ENCODE measurements at regions of chrX and their contacts with region 1.

Region 1: DNA sequence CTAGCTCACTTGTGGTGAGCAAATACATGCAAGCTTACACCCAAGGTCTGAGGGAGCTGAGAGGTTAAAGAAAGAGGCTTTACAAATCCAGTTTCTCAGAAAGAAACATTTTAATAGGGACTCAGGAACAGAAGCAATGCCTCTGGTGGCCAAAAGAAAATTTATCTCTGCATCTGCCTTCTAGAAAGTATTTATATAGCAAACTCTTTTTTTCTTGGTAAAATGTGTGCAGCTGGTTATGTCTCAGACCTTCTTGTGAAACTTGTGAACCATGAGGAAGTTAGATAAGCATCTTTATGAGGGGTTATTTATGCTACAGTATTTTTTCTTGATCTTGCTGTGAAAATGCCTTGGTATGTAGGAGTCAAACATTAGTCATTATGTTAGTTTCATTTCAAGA is 48.5 kb upstream of the CYSLTR1 start:
- DNase-seq: peak; percentile 92
- ATAC-seq: peak; percentile 92
- H3K4me3 ChIP-seq: no peak overlapping the region
- H3K27ac ChIP-seq: peak overlapping the region; percentile 94
- H3K4me1 ChIP-seq: peaks cover 40% of the 10 kb centered on the region
- H3K27me3 ChIP-seq: no peaks in the 10 kb centered on the region
- CTCF ChIP-seq: peak; percentile 58; the same call in 1 of the 2 replicates

Region 2: GRCh38 chrX:78119521-78120227 is 256.2 kb before region 1 on chrX:
- CTCF ChIA-PET with region 1: no interaction called
- POLR2A ChIA-PET with region 1: no interaction called
- intact Hi-C with region 1: loop called (anchors 5 kb)
- DNase-seq: peak; percentile 38
- ATAC-seq: peak; percentile 30; the same call in 1 of the 2 replicates
- H3K4me3 ChIP-seq: no peak overlapping the region
- H3K27ac ChIP-seq: no peak overlapping the region
- H3K4me1 ChIP-seq: peaks cover 21% of the 10 kb centered on the region
- H3K27me3 ChIP-seq: no peaks in the 10 kb centered on the region
- CTCF ChIP-seq: peak; percentile 61

Region 3: DNA sequence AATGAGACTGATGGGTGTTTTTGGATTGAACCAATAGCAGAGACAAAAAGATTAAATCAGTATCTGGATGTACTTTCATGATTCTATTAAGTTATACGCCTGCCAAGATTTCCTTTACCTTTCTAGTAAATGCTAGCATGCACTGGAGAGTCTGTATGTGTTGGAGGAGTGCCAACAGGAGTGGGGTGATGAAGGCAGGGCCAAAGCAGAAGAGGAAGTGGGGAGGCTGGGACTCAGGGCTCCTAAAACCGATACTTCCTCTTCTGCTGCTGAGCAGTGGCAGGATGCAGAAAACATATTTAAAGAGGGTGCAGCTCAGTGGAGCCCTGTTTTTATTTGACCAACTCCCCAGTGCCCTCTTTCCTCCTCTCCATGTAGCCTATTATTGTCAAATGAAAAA is 54.1 kb before region 1 on chrX:
- CTCF ChIA-PET with region 1: no interaction called
- POLR2A ChIA-PET with region 1: interaction called, 15 read pairs
- intact Hi-C with region 1: no loop called
- DNase-seq: peak; percentile 40
- ATAC-seq: peak; percentile 74
- H3K4me3 ChIP-seq: no peak overlapping the region
- H3K27ac ChIP-seq: no peak overlapping the region
- H3K4me1 ChIP-seq: 0 out of 2 replicates have a peak, but pooled peaks cover 4% of the 10 kb centered on the region
- H3K27me3 ChIP-seq: no peaks in the 10 kb centered on the region
- CTCF ChIP-seq: no peak

Region 4: DNA sequence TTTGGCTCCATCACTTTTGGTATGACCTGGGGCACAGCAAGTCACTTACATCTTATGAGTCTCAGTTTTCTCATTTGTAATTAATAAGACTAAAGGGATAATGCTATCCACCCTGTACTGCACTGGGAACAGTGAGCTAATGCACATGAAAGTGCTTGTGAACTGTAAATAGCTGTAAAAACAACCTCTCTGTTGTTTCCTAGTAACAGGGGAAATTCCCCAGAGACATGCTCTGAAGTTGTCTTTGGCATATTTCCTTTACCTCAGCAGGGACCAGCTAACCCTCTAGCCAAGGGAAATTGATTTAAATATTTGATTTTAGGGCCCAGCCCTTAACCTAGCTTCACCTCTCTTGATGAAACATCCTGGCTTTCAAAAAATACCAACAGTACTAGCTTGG is 42.4 kb before region 1 on chrX:
- CTCF ChIA-PET with region 1: no interaction called
- POLR2A ChIA-PET with region 1: no interaction called
- intact Hi-C with region 1: loop called (anchors 5 kb)
- DNase-seq: peak; percentile 4
- ATAC-seq: peak; percentile 81
- H3K4me3 ChIP-seq: no peak overlapping the region
- H3K27ac ChIP-seq: no peak overlapping the region
- H3K4me1 ChIP-seq: no peaks in the 10 kb centered on the region; the same call in 1 of the 2 replicates
- H3K27me3 ChIP-seq: no peaks in the 10 kb centered on the region
- CTCF ChIP-seq: no peak

Region 5: GRCh38 chrX:78455901-78456300 is 80.0 kb after region 1 on chrX:
- CTCF ChIA-PET with region 1: no interaction called
- POLR2A ChIA-PET with region 1: no interaction called
- intact Hi-C with region 1: loop called (anchors 5 kb)
- DNase-seq: peak; percentile 77
- ATAC-seq: peak; percentile 97
- H3K4me3 ChIP-seq: no peak overlapping the region
- H3K27ac ChIP-seq: peak overlapping the region; percentile 28; the same call in 1 of the 2 replicates
- H3K4me1 ChIP-seq: peaks cover 27% of the 10 kb centered on the region
- H3K27me3 ChIP-seq: no peaks in the 10 kb centered on the region
- CTCF ChIP-seq: no peak

Region 6: DNA sequence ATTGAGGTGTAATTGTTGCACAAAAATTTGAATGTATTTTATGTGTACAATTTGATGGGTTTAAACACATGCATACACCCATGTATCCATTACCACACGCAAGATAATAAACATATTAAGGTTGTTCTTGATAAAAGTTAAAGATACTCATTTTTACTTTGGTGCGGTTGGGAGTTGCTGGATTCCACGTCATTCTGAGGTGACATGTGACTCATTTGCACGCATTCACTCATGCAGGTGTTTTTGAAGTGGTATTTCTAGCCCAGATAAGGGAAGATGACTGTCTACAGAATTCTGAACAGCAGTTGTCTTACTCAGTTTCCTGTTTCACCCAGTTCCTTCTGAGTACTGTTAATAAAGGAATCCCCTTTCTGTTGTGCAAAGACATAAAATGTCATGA is 141.2 kb after region 1 on chrX:
- CTCF ChIA-PET with region 1: no interaction called
- POLR2A ChIA-PET with region 1: no interaction called
- intact Hi-C with region 1: loop called (anchors 10 kb)
- DNase-seq: peak; percentile 80
- ATAC-seq: peak; percentile 56
- H3K4me3 ChIP-seq: no peak overlapping the region
- H3K27ac ChIP-seq: peak overlapping the region; percentile 67
- H3K4me1 ChIP-seq: peaks cover 33% of the 10 kb centered on the region
- H3K27me3 ChIP-seq: no peaks in the 10 kb centered on the region
- CTCF ChIP-seq: no peak

Region 7: DNA sequence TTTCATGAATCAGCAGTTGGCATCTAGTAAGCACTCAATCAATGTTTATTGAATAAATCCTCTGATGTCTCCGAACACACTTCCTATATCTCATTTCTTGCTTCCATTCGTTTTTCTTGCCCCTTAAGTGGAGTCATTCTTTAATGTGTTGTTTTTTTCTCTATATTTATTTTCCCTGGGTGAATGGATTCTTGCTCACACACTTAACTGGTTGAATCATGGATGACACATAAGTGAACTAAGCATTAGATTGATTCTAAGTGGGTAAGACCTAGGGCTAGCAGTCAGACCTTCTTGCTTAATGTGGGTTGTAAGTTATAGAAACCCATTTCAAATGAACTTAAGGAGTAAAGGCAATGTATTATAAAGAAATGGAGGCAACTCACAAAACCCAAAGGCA is 172.1 kb after region 1 on chrX:
- CTCF ChIA-PET with region 1: no interaction called
- POLR2A ChIA-PET with region 1: no interaction called
- intact Hi-C with region 1: loop called (anchors 10 kb)
- DNase-seq: peak; percentile 88
- ATAC-seq: peak; percentile 97
- H3K4me3 ChIP-seq: no peak overlapping the region
- H3K27ac ChIP-seq: peak overlapping the region; percentile 98
- H3K4me1 ChIP-seq: peaks cover 15% of the 10 kb centered on the region
- H3K27me3 ChIP-seq: no peaks in the 10 kb centered on the region
- CTCF ChIP-seq: no peak

Measured in PC-3 (cell line).